ENCODE measurements at regions of chr1 and their contacts with region 1.

Region 1: GRCh38 chr1:2586154-2587070 is at the start of gene PRXL2B:
- DNase-seq: peak; percentile 100
- H3K4me3 Mint-ChIP-seq: peak within 1 kb of the TSS; percentile 93
- H3K27ac Mint-ChIP-seq: peak within 1 kb of the TSS; percentile 95
- H3K4me1 Mint-ChIP-seq: peaks cover 36% of the 10 kb centered on the region
- H3K27me3 Mint-ChIP-seq: no peaks in the 10 kb centered on the region
- total RNA-seq, gene PRXL2B: 42.3 and 43.5 TPM in 2 replicates

Region 2: DNA sequence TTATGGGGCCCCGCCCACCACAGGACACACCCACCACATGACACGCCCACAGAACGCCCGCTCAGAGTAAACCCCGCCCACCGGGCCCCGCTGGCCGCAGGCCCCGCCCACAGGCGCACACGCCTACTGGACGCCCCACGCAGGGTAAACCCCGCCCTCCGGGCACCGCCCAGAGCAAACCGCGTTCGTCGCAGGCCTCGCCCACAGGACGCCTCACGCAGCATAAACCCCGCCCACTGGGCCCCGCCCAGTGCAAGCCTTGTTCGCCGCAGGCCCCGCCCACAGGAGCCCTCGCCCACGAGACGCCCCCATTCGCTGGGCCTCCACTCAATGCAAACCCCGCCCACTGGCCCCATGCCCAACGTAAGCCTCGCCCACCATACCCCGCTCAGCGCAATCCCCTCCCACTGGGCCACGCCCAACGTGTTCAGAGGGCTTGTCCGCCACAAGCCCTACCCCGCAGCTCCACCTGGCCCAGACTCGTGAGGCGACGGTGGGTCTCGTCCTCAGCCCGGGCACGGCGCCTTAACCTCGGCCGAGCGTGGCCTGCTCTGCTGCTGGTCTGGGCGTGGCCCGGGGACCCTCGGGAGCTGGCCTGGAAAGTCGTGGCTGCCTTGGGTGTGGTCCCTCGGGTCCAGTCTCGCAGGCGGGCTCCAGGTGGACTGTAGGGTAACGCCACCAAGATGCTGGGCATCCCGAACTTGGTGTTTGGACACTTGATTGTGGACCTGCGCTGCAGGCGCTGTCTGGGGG is 666.9 kb before region 1 on chr1:
- intact Hi-C with region 1: loop called (anchors 5 kb)
- DNase-seq: peak; percentile 100
- H3K4me3 Mint-ChIP-seq: peak overlapping the region; percentile 79
- H3K27ac Mint-ChIP-seq: peak overlapping the region; percentile 70
- H3K4me1 Mint-ChIP-seq: peaks cover 3% of the 10 kb centered on the region
- H3K27me3 Mint-ChIP-seq: peaks cover 2% of the 10 kb centered on the region

Region 3: DNA sequence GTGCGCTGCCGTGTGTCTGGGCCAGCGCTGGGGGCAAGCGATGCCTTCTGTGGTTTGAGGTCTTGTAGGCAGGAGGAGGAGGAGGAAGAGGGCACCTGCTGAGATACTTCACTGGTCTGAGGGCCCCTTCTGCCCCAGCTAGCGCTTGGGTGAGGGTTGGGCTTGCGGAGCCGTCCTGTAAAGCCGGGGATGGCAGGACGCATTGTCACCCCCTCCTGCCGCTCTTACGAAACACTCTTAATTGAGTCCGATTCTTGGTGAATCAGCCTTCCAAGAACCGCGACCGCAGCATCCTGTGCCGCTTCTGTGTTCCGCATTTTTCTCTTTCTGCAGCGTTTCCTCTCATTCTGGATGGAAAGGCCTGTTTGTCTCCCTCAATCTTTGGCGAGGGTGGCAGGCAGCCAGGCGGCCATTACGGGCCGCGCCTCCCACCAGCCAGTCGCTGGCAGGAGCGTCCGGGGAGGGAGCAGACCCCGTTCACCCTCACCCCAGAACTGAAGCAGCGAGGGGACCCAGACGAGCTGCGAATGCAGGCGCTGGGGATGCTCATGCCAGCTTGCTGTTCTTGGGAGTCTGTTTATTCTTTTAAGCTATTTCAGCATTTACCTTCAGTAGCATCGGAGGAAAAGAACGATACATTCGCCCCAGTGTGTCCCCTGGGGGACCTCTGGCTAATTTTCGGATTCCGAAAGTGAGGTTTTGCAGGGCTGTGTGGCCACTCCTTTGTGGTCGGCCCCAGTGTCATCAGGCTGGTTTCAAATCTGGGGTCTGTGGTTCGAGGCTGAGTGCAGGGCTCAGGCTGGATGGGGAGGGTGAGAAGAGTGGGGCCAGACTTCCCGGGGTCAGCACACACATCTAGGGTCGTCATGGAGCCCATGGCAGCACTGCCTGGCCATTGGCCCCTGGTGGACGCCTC is 295.6 kb before region 1 on chr1:
- intact Hi-C with region 1: loop called (anchors 10 kb)
- DNase-seq: peak; percentile 94
- H3K4me3 Mint-ChIP-seq: peak overlapping the region; percentile 86
- H3K27ac Mint-ChIP-seq: peak overlapping the region; percentile 95
- H3K4me1 Mint-ChIP-seq: peaks cover 67% of the 10 kb centered on the region
- H3K27me3 Mint-ChIP-seq: no peaks in the 10 kb centered on the region

Region 4: GRCh38 chr1:2525920-2526823 is 60.2 kb before region 1 on chr1 and contains the start of gene PANK4:
- intact Hi-C with region 1: loop called (anchors 1 kb)
- DNase-seq: peak; percentile 97
- H3K4me3 Mint-ChIP-seq: peak within 1 kb of the TSS; percentile 85
- H3K27ac Mint-ChIP-seq: peak within 1 kb of the TSS; percentile 96
- H3K4me1 Mint-ChIP-seq: peaks cover 38% of the 10 kb centered on the region
- H3K27me3 Mint-ChIP-seq: peaks cover 15% of the 10 kb centered on the region
- total RNA-seq, gene PANK4: 55.2 and 56.7 TPM in 2 replicates

Region 5: GRCh38 chr1:2545759-2546514 is 40.5 kb before region 1 on chr1:
- intact Hi-C with region 1: loop called (anchors 1 kb)
- DNase-seq: peak; percentile 97
- H3K4me3 Mint-ChIP-seq: peak overlapping the region; percentile 93
- H3K27ac Mint-ChIP-seq: peak overlapping the region; percentile 95
- H3K4me1 Mint-ChIP-seq: peaks cover 11% of the 10 kb centered on the region
- H3K27me3 Mint-ChIP-seq: peaks cover 8% of the 10 kb centered on the region

Region 6: GRCh38 chr1:2556277-2556677 is 30.1 kb before region 1 on chr1 and contains the start of gene TNFRSF14:
- intact Hi-C with region 1: loop called (anchors 1 kb)
- DNase-seq: peak; percentile 94
- H3K4me3 Mint-ChIP-seq: peak within 1 kb of the TSS; percentile 99
- H3K27ac Mint-ChIP-seq: peak within 1 kb of the TSS; percentile 98
- H3K4me1 Mint-ChIP-seq: peaks cover 25% of the 10 kb centered on the region
- H3K27me3 Mint-ChIP-seq: no peaks in the 10 kb centered on the region
- total RNA-seq, gene TNFRSF14: 207 and 209 TPM in 2 replicates

Region 7: GRCh38 chr1:2642560-2643413 is 56.4 kb after region 1 on chr1:
- intact Hi-C with region 1: loop called (anchors 1 kb)
- DNase-seq: peak; percentile 98
- H3K4me3 Mint-ChIP-seq: peak overlapping the region; percentile 92
- H3K27ac Mint-ChIP-seq: peak overlapping the region; percentile 91
- H3K4me1 Mint-ChIP-seq: peaks cover 3% of the 10 kb centered on the region
- H3K27me3 Mint-ChIP-seq: no peaks in the 10 kb centered on the region

Measured in activated CD4-positive, alpha-beta T cell treated with anti-CD3 and anti-CD28 coated beads, Interleukin-2, amount 10 ng/mL, durations not matched to agents 24 days and 14 days (primary cell).